AG04449 (cell line): ENCODE measurements at regions of chr6 and their contacts with region 1.

Region 1: DNA sequence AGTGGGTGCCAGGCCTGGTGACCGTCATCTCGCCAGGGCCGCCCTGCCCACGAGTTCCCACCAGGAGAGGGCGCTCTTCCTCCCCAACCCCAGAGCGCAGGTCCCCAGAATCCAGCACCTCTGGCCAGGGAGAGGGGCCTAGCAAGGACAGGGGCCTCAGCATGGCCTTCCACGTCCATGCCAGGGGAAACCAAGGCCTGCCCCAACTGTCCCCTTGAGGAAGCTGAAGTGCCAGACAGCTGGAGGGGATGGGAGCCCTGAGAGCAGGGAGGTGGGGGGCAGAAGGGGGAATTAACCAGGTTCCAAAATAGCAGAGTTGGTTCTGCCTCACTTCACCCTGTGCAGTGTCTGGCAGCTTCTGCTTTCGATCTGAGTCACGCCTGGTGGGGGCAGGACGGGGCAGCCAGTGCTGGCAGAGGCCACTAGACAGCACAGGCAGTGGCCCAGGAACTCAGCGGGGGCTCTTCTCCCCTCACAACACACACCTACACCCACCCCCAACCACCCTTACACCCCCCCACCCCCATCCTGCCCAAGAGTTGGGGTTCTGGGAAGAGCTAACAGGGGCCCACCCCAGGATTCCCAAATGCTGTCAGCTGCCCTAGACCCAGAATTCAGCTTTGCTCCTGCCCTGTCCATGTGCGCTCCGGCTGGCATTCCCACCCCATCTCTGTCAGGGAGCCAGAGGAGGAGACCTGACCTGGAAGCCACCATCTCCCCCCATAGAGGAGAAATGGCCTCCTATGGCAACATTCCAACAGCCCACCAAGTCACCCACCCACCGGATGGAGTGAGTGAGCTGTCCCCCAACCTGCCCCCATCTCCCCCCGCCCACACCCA is 29.2 kb downstream of the TFEB start:
- DNase-seq: no peak
- H3K4me3 ChIP-seq: no peak overlapping the region
- CTCF ChIP-seq: peak; percentile 76

Region 2: DNA sequence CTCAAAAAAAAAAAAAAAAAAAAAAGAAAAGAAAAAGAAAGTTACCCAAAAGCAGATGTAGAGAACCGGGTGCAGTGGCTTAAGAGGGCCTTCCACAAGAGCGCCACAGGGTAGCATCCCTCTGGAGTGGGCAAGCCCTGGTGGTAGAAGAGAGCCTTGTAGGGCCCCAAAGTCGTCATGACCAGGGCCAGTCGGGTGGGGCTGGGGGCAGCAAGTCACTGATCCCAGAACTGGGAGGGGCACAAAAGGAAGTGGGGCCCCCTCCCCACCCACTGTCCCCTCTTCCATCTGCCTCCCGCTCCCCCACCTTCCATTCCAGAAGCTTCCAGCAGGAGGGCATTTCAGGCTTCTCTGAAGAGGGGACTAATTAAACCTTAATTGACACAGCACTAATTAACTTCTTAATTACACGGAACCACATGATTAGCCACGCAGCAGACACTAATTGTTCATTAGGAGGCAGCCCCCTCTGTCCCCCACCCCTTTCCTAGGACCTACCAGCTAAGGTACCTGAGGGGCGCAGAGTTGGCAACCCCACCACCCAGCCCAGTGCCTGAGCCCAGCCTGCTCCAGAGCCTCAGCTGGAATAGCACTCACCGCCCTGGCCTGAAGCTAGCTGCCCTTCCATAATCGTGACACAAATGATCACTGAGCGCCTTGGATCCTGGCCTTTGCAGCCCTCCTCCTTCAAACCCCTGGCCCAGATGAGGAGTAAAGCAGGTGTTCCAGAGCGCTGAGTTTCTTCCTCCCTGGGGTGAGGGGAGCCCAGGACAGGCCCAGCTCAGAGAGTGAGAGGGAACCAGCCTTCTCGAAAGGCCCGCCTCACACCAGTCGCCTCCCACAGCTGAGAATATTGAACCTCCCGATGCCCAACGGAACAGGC is 33.2 kb before region 1 on chr6:
- CTCF ChIA-PET with region 1: no interaction called
- POLR2A ChIA-PET with region 1: no interaction called
- DNase-seq: no peak
- H3K4me3 ChIP-seq: no peak overlapping the region
- CTCF ChIP-seq: no peak

Region 3: GRCh38 chr6:41689171-41690008 is 16.8 kb before region 1 on chr6:
- CTCF ChIA-PET with region 1: interaction called, 37 read pairs
- POLR2A ChIA-PET with region 1: interaction called, 4 read pairs
- DNase-seq: no peak
- H3K4me3 ChIP-seq: no peak overlapping the region
- CTCF ChIP-seq: no peak

Region 4: DNA sequence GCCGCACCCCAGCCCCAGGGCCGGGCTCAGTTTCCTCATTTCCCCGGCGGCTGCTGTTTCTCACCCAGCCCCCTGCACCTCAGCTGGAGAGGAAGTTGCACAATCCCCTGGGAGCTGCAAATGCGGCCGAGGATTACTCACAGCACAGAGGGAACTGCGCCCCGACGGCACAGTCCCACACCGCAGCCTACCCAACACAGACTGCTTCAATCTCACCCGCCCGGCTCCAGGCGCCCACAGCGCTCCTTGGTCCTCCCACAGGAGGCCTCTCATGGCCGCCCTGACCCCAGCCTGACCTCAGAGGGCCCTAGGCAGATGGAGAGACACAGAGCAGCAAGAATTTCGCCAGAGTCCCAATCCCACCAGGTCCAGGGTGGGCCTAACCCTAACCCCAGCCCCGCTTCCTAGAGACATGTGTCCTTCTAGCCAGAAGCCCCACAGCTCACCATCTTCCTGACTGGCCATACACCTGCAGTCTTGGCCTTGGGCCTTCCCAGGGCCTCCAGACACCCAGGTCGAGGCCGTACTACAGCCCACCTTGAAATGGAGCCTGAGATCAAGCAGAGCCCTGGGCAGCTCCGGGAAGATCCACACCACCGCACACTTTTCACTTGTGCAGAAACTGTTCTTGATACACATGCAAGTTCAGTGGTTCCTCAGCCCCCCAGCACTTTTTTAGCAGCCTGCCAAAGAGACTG is 17.5 kb after region 1 on chr6:
- CTCF ChIA-PET with region 1: interaction called, 30 read pairs
- POLR2A ChIA-PET with region 1: no interaction called
- DNase-seq: peak; percentile 63
- H3K4me3 ChIP-seq: peak overlapping the region; percentile 44
- CTCF ChIP-seq: peak; percentile 7

Region 5: DNA sequence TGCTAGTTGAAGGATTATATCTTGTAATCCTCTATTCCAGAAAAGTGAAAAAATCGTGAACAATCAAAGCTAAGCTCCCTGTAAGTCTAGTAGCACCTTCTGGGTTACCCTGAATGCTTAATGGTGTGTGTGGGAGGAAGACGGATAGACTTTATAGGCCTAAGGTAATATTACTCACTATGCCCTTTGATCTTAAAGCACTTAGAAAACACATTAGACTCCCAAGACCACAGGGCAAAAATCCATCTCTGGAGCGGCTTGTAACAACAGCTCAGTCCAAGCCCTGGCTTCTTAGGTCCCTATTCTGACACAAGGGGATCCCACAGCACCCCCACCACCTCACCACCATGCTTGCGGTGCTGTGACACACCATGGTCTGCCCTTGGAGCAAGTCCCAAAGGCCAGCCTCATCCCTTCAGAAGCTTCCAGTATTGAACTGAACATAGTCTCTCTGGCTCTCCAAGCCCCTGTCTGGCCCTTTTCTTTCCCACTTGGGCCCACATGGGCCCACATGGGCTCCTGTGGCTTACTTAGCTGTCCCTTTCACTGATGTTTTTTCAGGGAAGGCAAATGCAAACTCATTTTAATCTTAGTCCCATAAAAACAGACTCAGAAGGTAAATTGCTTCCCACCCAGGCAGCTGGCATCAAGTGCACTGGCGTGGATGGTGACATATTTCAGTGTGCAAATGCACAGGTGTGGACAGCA is 407.9 kb after region 1 on chr6:
- CTCF ChIA-PET with region 1: no interaction called
- POLR2A ChIA-PET with region 1: no interaction called
- DNase-seq: no peak
- H3K4me3 ChIP-seq: no peak overlapping the region
- CTCF ChIP-seq: no peak